Cardiac septum (tissue), 1 donor: ENCODE measurements at regions of chr12 and their contacts with region 1.

Region 1: DNA sequence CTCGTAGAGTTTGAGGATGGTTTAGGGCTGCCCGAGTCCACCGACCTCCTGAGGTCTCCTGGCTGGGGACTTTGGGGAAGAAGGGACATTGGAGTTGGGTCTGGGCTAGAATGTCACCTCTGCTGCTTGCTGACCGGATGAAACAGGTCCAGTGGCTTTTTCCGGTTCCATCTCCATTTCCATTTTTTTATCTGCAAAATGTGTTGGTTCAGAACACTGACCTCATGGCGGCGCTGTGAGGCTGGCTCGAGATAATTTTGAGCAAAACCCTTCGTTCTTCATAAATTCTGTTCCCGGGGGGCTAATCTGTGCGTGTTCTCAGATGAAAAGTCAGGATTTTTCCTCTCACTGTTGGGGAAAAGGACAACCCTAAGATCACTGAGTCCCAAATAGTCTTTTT is 11.7 kb upstream of the MYL2 start:
- DNase-seq: no peak

Region 2: GRCh38 chr12:110920324-110920910 is 11.6 kb before region 1 on chr12 and contains the start of gene MYL2:
- intact Hi-C with region 1: loop called (anchors 1 kb)
- DNase-seq: peak; percentile 80
- total RNA-seq, gene MYL2: 24,495 TPM

Region 3: GRCh38 chr12:111261911-111262676 is 330.0 kb after region 1 on chr12:
- intact Hi-C with region 1: no loop called
- DNase-seq: no peak

Region 4: GRCh38 chr12:111363642-111363977 is 431.6 kb after region 1 on chr12:
- intact Hi-C with region 1: loop called (anchors 5 kb)
- DNase-seq: no peak